K562 (cell line): ENCODE measurements at regions of chr9 and their contacts with region 1.

Region 1: DNA sequence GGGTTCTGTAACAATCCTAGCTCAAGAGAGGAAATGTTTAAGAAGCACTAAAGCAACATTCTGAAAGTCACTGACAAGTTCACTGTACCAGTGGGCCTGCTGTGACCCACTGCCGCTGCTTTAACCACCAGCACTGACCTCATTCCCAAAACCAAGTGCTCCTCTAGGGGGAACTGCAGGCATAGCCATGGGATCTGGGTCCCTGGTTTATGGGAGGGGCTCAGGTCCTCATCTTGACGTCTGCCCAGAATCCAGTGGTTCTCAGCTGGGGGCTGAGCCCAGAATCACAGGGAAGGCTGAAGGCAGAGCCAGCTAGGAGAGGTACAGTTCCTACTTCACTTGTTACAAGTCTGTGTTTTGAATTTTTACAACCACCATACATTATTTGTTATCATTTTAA is 36.1 kb upstream of the SLC2A8 start:
- DNase-seq: peak; percentile 47 to 58 (median 54)
- ATAC-seq: peak; percentile 90
- H3K4me3 ChIP-seq: no peak overlapping the region
- H3K27ac ChIP-seq: no peak overlapping the region
- H3K4me1 ChIP-seq: peaks cover 7 to 9% of the 10 kb centered on the region in 2 experiments; a peak in 3 of 5 replicates
- H3K27me3 ChIP-seq: peaks cover 3 to 8% of the 10 kb centered on the region in 2 experiments; a peak in 3 of 5 replicates
- CTCF ChIP-seq: peak; percentile 50 to 71 (median 56); a peak in 5 of 6 replicates
- EP300 ChIP-seq: no peak
- POLR2A ChIP-seq: no peak
- RAD21 ChIP-seq: peak; percentile 36 to 68

Region 2: GRCh38 chr9:127205183-127205470 is 155.7 kb before region 1 on chr9:
- CTCF ChIA-PET with region 1: no interaction called
- POLR2A ChIA-PET with region 1: no interaction called
- in situ Hi-C with region 1: no loop called
- intact Hi-C with region 1: loop called (anchors 5 kb)
- DNase-seq: peak; percentile 49 to 59 (median 57)
- ATAC-seq: peak; percentile 66
- H3K4me3 ChIP-seq: no peak overlapping the region
- H3K27ac ChIP-seq: no peak overlapping the region
- H3K4me1 ChIP-seq: peaks cover 16 to 19% of the 10 kb centered on the region in 2 experiments; a peak in 4 of 5 replicates
- H3K27me3 ChIP-seq: peaks cover 4 to 80% of the 10 kb centered on the region in 2 experiments; a peak in 3 of 5 replicates
- CTCF ChIP-seq: peak; percentile 21 to 48 (median 44); a peak in 4 of 6 replicates
- EP300 ChIP-seq: no peak
- POLR2A ChIP-seq: no peak
- RAD21 ChIP-seq: peak in 1 of 2 experiments; percentile 44; a peak in 2 of 4 replicates

Region 3: GRCh38 chr9:127277099-127277498 is 83.7 kb before region 1 on chr9:
- CTCF ChIA-PET with region 1: no interaction called
- POLR2A ChIA-PET with region 1: no interaction called
- in situ Hi-C with region 1: no loop called
- intact Hi-C with region 1: no loop called
- DNase-seq: no peak
- ATAC-seq: no peak
- H3K4me3 ChIP-seq: no peak overlapping the region
- H3K27ac ChIP-seq: no peak overlapping the region
- H3K4me1 ChIP-seq: no peaks in the 10 kb centered on the region
- H3K27me3 ChIP-seq: peaks cover 3 to 9% of the 10 kb centered on the region in 2 experiments; a peak in 2 of 5 replicates
- CTCF ChIP-seq: no peak
- EP300 ChIP-seq: no peak
- POLR2A ChIP-seq: no peak
- RAD21 ChIP-seq: no peak

Region 4: DNA sequence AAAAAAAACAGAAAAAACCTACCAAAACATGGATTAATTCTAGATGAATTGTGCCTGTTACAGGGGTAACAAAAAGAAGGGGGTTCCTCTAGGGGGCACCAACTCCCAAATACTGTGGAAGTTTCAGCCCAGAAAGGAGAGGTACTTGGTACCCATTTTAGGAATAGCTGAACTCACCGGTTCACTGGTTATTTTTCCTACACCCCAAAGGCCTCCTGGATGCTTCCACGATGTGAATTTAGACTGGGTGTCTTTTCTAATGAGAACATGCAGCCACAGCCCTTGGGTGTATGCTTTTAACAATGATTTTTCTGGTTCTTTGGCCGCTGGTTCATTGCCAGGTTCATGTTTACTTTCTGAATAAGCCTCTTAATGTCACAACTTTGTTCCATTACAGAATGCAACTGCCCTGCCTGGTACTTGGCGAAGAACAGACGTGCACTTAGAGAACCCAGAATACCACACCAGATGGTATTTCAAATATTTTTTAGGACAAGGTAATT is 49.5 kb before region 1 on chr9:
- CTCF ChIA-PET with region 1: no interaction called
- POLR2A ChIA-PET with region 1: interaction called, 5 read pairs
- in situ Hi-C with region 1: no loop called
- intact Hi-C with region 1: loop called (anchors 5 kb)
- DNase-seq: peak; percentile 25 to 45 (median 38)
- ATAC-seq: peak; percentile 65; the same call in 1 of the 3 replicates
- H3K4me3 ChIP-seq: no peak overlapping the region
- H3K27ac ChIP-seq: no peak overlapping the region
- H3K4me1 ChIP-seq: no peaks in the 10 kb centered on the region; a peak in 1 of 5 replicates
- H3K27me3 ChIP-seq: peaks cover 0 to 4% of the 10 kb centered on the region in 2 experiments; a peak in 1 of 5 replicates
- CTCF ChIP-seq: peak; percentile 36 to 66 (median 58); a peak in 5 of 6 replicates
- EP300 ChIP-seq: no peak
- POLR2A ChIP-seq: no peak
- RAD21 ChIP-seq: peak; percentile 30 to 42; a peak in 3 of 4 replicates

Region 5: DNA sequence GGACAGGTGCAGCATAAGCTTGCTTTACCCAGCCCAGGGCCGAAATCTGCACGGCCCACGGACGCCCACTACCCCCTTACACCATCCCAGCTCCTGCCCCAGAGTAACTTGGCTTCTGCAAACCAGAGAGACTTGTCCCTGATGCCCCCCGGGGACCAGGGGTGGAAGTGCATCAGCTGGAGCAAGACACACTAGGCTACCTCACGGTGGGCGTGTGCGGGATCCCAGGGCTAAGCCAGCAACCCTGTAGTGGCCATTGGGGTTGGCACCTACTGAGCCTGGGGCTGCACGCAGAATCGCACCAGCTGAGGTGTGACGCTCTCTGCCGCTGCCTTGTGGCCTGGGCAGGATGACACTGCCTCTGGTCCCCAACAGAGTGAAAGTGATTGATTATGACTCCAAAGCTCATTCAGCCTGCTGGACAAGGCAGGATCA is 57.2 kb after region 1 on chr9:
- CTCF ChIA-PET with region 1: no interaction called
- POLR2A ChIA-PET with region 1: no interaction called
- in situ Hi-C with region 1: no loop called
- intact Hi-C with region 1: loop called (anchors 2 kb)
- DNase-seq: peak; percentile 52 to 61 (median 59)
- ATAC-seq: peak; percentile 82
- H3K4me3 ChIP-seq: no peak overlapping the region
- H3K27ac ChIP-seq: no peak overlapping the region
- H3K4me1 ChIP-seq: peaks cover 26 to 29% of the 10 kb centered on the region in 2 experiments
- H3K27me3 ChIP-seq: no peaks in the 10 kb centered on the region
- CTCF ChIP-seq: peak; percentile 40 to 70 (median 44); a peak in 5 of 6 replicates
- EP300 ChIP-seq: no peak
- POLR2A ChIP-seq: no peak
- RAD21 ChIP-seq: peak in 1 of 2 experiments; percentile 44; a peak in 2 of 4 replicates

Region 6: DNA sequence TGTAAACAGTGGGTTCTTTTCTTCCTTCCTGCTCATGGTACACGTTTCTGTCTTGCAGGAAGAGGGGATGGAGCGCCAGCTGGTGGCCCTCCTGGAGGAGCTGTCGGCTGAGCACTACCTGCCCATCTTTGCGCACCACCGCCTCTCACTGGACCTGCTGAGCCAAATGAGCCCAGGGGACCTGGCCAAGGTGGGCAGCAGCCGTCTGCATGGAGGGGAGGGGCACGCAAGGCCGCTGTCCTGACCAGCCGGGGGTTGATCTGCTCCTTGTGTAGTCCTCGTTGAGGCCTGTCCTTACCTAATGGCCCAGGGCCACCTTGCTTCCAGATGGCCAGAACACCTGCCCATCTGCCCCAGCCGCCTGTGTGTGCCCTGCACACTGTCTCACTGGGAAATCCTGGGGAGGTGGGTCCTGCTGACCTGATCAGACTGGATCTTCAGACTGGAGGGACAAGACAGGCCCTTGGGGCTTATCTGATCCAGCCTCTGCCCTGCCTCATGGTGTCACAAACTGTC is 135.1 kb after region 1 on chr9:
- CTCF ChIA-PET with region 1: no interaction called
- POLR2A ChIA-PET with region 1: no interaction called
- in situ Hi-C with region 1: no loop called
- intact Hi-C with region 1: loop called (anchors 5 kb)
- DNase-seq: no peak
- ATAC-seq: peak; percentile 58; the same call in 2 of the 3 replicates
- H3K4me3 ChIP-seq: no peak overlapping the region
- H3K27ac ChIP-seq: no peak overlapping the region
- H3K4me1 ChIP-seq: peaks cover 6 to 28% of the 10 kb centered on the region in 2 experiments; a peak in 4 of 5 replicates
- H3K27me3 ChIP-seq: no peaks in the 10 kb centered on the region
- CTCF ChIP-seq: peak; percentile 34 to 49 (median 47); a peak in 5 of 6 replicates
- EP300 ChIP-seq: no peak
- POLR2A ChIP-seq: no peak
- RAD21 ChIP-seq: peak in 1 of 2 experiments; percentile 54; a peak in 2 of 4 replicates